Sciatic nerve (tissue), 2 donors: ENCODE measurements at regions of chr16 and their contacts with region 1.

Region 1: GRCh38 chr16:48479955-48480354 is 94.7 kb upstream of the SIAH1 start:
- DNase-seq: no peak
- ATAC-seq: no peak

Region 2: GRCh38 chr16:48394826-48395774 is 84.9 kb before region 1 on chr16:
- intact Hi-C with region 1: loop called (anchors 2 kb)
- DNase-seq: no peak
- ATAC-seq: no peak

Region 3: GRCh38 chr16:48409839-48410611 is 69.9 kb before region 1 on chr16:
- intact Hi-C with region 1: loop called (anchors 2 kb)
- DNase-seq: no peak
- ATAC-seq: peak; percentile 35

Region 4: DNA sequence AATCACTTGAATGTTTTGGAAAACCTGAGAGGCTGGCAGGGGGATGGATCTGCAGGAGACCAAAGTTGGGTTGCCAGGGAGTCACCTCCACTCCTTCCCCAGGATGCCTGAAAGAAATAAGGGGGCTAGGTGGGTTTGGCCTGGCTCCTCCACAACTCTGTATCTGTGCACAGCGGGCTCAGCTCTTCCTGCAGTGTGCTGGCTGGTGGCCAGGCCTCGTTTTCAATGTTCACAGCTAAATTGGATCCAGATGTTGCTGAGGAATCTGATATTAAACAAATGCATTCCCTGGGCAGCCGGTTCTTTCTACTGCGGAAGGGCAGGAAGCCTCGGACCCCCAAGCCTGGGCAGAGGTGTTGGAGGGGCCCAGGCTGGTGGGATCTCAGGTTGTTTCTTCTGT is 23.8 kb after region 1 on chr16:
- intact Hi-C with region 1: no loop called
- DNase-seq: peak; percentile 90
- ATAC-seq: peak; percentile 38